ENCODE measurements at regions of chr7 and their contacts with region 1.

Region 1: GRCh38 chr7:100604028-100604975 is 2.1 kb downstream of the PCOLCE start:
- DNase-seq: peak; percentile 59
- ATAC-seq: peak; percentile 65
- H3K4me3 ChIP-seq: peak overlapping the region; percentile 80
- H3K27ac ChIP-seq: no peak overlapping the region
- H3K4me1 ChIP-seq: peaks cover 24% of the 10 kb centered on the region
- H3K27me3 ChIP-seq: no peaks in the 10 kb centered on the region
- CTCF ChIP-seq: peak; percentile 52

Region 2: DNA sequence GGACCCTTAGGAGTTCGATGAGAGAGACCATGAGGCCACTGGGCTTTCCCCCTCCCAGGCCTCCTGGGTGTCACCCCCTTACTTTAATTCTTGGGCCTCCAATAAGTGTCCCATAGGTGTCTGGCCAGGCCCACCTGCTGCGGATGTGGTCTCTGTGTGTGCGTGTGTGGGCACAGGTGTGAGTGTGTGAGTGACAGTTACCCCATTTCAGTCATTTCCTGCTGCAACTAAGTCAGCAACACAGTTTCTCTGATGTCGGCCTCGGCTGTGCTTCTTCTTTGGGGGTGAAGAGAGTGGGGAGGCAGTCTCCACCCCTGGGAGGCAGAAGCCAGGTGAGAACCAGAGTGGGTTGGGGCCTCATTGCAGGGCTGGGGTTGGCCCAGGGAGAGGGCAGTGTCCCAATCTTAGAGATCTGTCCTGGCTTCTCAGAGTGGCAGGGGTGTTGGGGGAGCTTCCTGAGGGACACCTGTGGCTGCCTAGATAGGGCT is 383.0 kb before region 1 on chr7:
- CTCF ChIA-PET with region 1: no interaction called
- POLR2A ChIA-PET with region 1: no interaction called
- intact Hi-C with region 1: no loop called
- DNase-seq: no peak
- ATAC-seq: no peak
- H3K4me3 ChIP-seq: no peak overlapping the region
- H3K27ac ChIP-seq: no peak overlapping the region
- H3K4me1 ChIP-seq: no peaks in the 10 kb centered on the region
- H3K27me3 ChIP-seq: no peaks in the 10 kb centered on the region
- CTCF ChIP-seq: no peak

Region 3: DNA sequence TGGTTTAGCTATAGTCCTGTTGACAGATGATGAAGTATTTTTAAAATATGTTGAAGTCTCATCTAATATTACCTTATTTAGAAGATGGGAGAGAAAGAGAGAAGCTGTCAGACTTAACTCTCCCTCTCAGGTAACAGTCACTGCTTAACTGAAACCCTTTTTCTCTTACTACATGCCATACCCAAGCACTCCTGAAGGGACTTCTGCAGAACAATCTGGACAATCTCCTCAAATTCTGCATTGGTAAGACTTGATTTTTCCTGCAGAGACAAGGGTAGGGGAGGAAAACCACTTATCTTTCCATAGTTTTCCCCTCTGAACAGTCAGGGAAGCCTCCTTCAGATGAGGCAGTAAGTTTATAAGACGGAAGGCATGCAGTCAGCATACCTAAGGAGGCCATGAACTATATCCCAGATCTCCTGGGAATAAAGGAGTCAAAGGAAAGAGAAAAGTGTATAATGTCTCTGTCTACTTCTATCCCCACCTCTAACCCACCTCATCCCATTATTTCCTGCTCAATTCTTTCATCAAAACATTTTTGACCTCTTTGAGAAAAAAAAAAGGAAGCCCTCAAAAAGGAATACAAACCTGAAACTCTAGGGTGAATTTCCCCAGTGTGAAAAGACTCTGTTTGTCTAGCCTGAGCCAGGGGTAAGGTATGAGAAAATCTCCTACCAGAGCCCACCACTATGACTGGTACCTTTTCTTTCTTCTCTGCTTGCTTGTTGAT is 185.2 kb before region 1 on chr7:
- CTCF ChIA-PET with region 1: no interaction called
- POLR2A ChIA-PET with region 1: no interaction called
- intact Hi-C with region 1: no loop called
- DNase-seq: no peak
- ATAC-seq: 0 out of 2 replicates have a peak, but pooled peaks have one; percentile 20
- H3K4me3 ChIP-seq: no peak overlapping the region
- H3K27ac ChIP-seq: no peak overlapping the region
- H3K4me1 ChIP-seq: no peaks in the 10 kb centered on the region
- H3K27me3 ChIP-seq: no peaks in the 10 kb centered on the region
- CTCF ChIP-seq: no peak

Region 4: GRCh38 chr7:100469227-100470044 is 134.9 kb before region 1 on chr7:
- CTCF ChIA-PET with region 1: no interaction called
- POLR2A ChIA-PET with region 1: no interaction called
- intact Hi-C with region 1: no loop called
- DNase-seq: peak; percentile 79
- ATAC-seq: peak; percentile 76
- H3K4me3 ChIP-seq: no peak overlapping the region
- H3K27ac ChIP-seq: no peak overlapping the region
- H3K4me1 ChIP-seq: no peaks in the 10 kb centered on the region
- H3K27me3 ChIP-seq: no peaks in the 10 kb centered on the region
- CTCF ChIP-seq: peak; percentile 80

Region 5: GRCh38 chr7:100793806-100794660 is 189.7 kb after region 1 on chr7:
- CTCF ChIA-PET with region 1: no interaction called
- POLR2A ChIA-PET with region 1: interaction called, 11 read pairs
- intact Hi-C with region 1: no loop called
- DNase-seq: peak; percentile 61
- ATAC-seq: peak; percentile 82
- H3K4me3 ChIP-seq: no peak overlapping the region
- H3K27ac ChIP-seq: peak overlapping the region; percentile 39
- H3K4me1 ChIP-seq: peaks cover 16% of the 10 kb centered on the region
- H3K27me3 ChIP-seq: no peaks in the 10 kb centered on the region
- CTCF ChIP-seq: no peak

Region 6: DNA sequence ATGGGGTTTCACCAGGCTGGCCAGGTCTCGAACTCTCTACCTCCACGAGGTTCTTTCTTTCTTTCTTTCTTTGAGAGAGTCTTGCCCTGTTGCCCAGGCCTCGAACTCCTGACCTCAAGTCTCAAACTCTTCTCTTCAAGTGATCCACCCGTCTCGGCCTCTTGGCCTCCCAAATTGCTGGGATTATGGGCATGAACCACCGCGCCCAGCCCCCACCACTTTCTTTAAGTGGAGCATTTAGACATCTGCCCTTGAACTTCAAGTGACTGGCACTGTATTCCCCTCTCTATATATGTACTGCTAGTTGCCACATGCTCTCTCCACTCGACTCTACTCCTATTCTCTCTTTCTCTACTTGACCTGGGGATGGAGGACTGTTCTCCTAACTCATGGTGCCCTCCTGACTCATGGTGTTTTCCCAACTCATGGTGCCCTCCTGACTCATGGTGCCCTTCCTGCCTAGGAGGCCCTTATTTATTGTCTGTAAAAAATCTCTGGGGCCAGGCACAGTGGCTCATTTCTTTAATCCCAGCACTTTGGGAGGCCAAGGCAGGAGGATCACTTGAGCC is 310.7 kb after region 1 on chr7:
- CTCF ChIA-PET with region 1: no interaction called
- POLR2A ChIA-PET with region 1: no interaction called
- intact Hi-C with region 1: no loop called
- DNase-seq: peak; percentile 58
- ATAC-seq: peak; percentile 35; the same call in 1 of the 2 replicates
- H3K4me3 ChIP-seq: no peak overlapping the region
- H3K27ac ChIP-seq: no peak overlapping the region
- H3K4me1 ChIP-seq: no peaks in the 10 kb centered on the region
- H3K27me3 ChIP-seq: no peaks in the 10 kb centered on the region
- CTCF ChIP-seq: no peak

Measured in PC-3 (cell line).